ENCODE measurements at regions of chr9 and their contacts with region 1.

Region 1: DNA sequence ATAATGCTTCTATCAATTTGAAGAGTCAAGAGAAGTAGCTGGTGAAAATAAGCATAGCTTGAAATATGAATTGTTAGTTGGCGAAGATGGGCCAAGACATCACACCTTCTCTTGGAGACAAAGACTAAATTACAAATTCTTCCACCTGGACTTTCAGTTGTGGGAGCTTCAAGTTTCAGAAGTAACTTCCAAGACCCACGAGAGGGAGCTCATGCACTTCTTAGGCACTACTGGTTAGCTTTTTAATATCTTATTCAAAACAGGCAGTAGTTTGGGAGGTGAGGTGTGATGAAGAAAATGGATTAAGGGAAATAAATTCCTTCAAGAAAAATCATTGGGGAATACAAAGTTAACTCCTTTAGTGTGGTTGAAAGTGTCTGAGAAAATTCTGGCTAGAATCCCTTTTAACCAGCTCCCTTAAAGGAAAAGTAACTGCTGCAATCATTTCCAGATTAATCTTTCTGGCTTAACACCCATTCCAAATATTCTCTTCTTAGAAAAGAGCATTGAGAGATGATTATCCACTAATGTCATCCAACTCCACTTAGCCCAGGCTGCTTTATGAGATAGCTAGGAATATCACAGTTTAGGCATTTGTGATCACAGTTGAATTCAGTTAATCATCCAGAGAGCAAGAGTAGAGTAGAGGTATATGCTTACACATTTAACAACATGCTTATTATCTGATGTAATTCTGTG is 139.5 kb upstream of the DMRTA1 start:
- DNase-seq: peak; percentile 76

Region 2: GRCh38 chr9:22446950-22447617 is 139.9 kb after region 1 on chr9:
- in situ Hi-C with region 1: loop called (anchors 25 kb)
- DNase-seq: peak; percentile 79